ENCODE measurements at regions of chr9 and their contacts with region 1.

Region 1: GRCh38 chr9:101727612-101728524 is 10.6 kb downstream of the GRIN3A start:
- DNase-seq: no peak
- ATAC-seq: no peak

Region 2: GRCh38 chr9:101601904-101602765 is 125.7 kb before region 1 on chr9:
- intact Hi-C with region 1: loop called (anchors 5 kb)
- DNase-seq: no peak
- ATAC-seq: peak; percentile 48

Region 3: GRCh38 chr9:102767076-102767475 is 1039.2 kb after region 1 on chr9:
- intact Hi-C with region 1: no loop called
- DNase-seq: no peak
- ATAC-seq: no peak

Measured in left ventricle myocardium superior (tissue), 1 donor.